AG04449 (cell line): ENCODE measurements at regions of chr19 and their contacts with region 1.

Region 1: DNA sequence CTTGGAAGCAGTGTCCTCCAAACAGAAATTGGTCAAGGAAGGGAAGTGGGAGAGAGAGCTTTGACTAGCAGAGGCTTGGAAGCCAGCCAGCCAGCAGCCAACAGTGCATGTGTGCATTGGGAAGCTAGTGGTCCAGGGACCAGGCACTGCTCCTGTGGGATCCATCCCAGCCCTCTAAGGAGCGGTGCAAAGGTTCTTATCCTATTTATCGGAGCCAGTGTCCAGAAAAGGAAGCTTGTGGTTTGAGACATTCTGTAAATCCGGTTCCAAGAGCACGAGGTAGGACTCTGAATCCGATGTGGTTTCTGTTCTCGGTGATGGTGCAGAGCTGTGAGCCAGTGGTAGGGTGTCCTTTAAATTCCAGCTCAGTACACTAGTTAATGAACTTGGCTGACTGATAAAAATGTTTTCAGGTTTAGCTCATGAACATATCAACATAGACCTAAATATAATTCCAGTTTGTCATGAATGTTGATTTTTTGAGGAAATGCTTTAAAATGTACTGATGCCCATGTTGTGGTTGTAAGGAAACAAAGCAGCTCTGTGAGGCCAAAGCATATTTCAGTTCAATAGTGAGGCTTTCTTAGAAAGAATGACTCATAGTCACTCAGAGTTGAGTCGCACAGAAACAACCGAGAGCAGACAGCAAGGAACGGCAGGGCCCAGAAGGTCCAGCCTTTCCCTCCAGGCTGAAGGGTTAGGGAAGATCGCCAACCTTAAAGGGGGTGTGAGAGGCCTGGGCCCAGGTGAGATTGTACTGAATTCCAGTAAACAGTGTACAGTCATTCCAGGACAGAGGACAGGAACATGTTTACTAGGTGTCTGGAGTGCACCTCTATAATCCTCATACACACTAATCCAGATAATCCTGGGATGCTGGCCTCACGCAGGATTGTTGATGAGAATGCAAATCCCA is 21.5 kb upstream of the GARRE1 start:
- DNase-seq: peak; percentile 91
- H3K4me3 ChIP-seq: 0 out of 2 replicates have a peak overlapping the region, but pooled peaks have one; percentile 26
- CTCF ChIP-seq: no peak

Region 2: DNA sequence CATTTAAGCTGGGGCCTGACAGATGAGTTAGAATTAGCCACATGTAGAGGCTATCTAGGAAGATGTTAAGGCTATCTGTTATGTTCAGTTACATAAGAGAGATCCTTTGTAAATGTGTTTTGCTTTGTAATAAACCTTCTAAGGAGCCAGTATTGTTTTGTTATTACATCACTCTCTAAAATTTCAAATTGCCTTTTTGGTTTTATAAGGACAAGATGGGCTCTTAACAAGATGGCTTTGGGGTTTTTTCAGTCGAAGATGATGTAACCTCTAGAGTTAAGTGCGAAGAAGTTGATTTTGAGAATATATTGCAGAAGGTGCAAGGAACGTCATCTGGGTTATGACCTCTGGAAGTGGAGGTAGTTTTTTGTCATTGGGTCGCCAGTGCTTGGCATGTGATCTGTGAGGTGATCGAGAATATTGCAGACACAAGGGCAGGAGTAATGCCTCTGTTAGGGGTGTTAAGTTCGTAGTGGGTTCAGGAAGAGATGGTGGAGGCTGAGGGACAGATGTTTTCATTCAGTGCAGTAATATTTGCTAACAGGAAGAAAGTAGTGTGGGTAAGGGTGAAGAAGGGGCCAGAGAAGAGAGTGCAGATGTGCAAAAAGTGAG is 47.8 kb before region 1 on chr19:
- CTCF ChIA-PET with region 1: no interaction called
- POLR2A ChIA-PET with region 1: no interaction called
- DNase-seq: no peak
- H3K4me3 ChIP-seq: no peak overlapping the region
- CTCF ChIP-seq: no peak

Region 3: DNA sequence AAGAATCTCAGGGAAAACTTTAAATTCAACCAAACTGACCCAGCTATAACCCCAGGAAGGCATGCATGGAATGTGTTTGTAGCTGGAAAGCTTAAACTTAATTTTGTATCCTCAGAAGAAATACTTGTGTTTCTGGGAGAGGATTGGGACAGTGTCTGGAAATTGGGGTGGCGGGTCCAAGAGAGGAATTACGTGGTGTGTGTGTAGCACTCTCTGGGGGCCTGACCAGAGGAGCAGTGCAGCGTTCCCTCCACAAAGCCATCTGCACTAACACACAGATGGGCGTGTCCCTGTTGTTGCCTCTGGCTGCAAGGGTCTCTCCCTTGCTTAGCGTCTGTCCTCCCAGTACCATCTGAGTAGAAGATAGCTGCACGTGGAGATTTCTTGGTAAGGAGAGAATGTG is 27.9 kb after region 1 on chr19:
- CTCF ChIA-PET with region 1: no interaction called
- POLR2A ChIA-PET with region 1: interaction called, 10 read pairs
- DNase-seq: no peak
- H3K4me3 ChIP-seq: no peak overlapping the region
- CTCF ChIP-seq: no peak